Heart right ventricle (tissue), 16 donors: ENCODE measurements at regions of chr18 and their contacts with region 1.

Region 1: GRCh38 chr18:2169706-2170105 is 401.6 kb downstream of the METTL4 start:
- DNase-seq: no peak
- ATAC-seq: no peak
- H3K4me3 ChIP-seq: no peak overlapping the region
- H3K27ac ChIP-seq: no peak overlapping the region
- H3K4me1 ChIP-seq: peaks cover 0 to 25% (median 12%) of the 10 kb centered on the region in 9 donors
- H3K27me3 ChIP-seq: no peaks in the 10 kb centered on the region
- CTCF ChIP-seq: no peak

Region 2: DNA sequence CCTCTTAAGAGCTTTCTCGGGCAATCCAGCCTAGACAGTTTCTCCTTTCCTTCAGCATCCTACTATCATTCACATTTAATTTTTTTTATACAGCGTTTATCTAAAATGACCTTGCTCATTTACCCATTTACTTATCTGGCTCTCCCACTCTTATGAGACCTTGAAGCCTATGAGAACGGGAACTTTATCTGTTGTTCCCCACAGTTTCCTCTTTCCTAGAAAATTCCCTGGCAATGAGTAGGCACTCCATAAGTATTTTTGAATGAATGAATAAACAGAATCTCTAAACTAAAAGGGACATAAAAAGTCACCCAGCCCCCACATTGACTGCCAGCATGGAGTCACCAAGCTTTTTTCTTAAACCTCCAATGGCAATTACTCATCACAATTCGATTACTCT is 48.4 kb after region 1 on chr18:
- intact Hi-C with region 1: loop called in 1 of 10 experiments (anchors 10 kb)
- DNase-seq: no peak
- ATAC-seq: no peak
- H3K4me3 ChIP-seq: no peak overlapping the region
- H3K27ac ChIP-seq: no peak overlapping the region
- H3K4me1 ChIP-seq: no peaks in the 10 kb centered on the region
- H3K27me3 ChIP-seq: no peaks in the 10 kb centered on the region
- CTCF ChIP-seq: no peak

Region 3: GRCh38 chr18:2274613-2275012 is 104.9 kb after region 1 on chr18:
- intact Hi-C with region 1: no loop called
- DNase-seq: no peak
- ATAC-seq: no peak
- H3K4me3 ChIP-seq: no peak overlapping the region
- H3K27ac ChIP-seq: no peak overlapping the region
- H3K4me1 ChIP-seq: no peaks in the 10 kb centered on the region
- H3K27me3 ChIP-seq: peaks cover 0 to 9% (median 0%) of the 10 kb centered on the region in 7 donors
- CTCF ChIP-seq: no peak